Psoas muscle (tissue), 8 donors: ENCODE measurements at regions of chr1 and their contacts with region 1.

Region 1: DNA sequence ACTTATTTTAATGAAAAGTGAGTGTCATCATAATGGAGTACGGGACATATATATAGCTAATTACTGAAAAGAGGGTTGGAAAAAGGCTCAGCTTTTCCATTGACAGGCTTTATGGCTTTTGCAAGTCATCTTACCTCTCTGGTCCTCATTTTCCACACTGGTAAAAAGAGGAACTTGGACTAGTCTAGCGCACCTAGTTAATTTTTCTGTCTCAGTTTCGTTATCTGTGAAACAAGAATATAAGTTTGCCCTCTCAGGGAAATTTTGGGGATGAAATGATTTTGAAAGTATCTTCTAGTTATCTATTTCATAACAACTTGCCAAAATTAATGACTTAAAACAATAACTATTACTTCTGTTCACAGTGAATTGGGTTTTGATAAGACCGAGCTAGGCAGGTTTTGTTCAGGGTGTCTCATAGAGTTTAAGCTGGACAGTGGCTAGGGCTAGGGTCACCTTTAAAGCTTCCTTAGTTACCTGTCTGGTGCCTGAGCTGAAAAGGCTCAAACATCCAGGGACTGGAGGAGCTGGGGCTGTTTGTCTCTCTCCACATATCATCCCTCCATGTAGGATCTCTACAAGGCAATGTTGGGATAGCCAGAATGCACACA is 91.7 kb downstream of the TYW3 start:
- DNase-seq: no peak
- ATAC-seq: no peak
- H3K4me3 ChIP-seq: no peak overlapping the region
- H3K27ac ChIP-seq: no peak overlapping the region
- H3K4me1 ChIP-seq: no peaks in the 10 kb centered on the region
- H3K27me3 ChIP-seq: peaks cover 0 to 2% (median 0%) of the 10 kb centered on the region in 3 donors
- CTCF ChIP-seq: no peak

Region 2: DNA sequence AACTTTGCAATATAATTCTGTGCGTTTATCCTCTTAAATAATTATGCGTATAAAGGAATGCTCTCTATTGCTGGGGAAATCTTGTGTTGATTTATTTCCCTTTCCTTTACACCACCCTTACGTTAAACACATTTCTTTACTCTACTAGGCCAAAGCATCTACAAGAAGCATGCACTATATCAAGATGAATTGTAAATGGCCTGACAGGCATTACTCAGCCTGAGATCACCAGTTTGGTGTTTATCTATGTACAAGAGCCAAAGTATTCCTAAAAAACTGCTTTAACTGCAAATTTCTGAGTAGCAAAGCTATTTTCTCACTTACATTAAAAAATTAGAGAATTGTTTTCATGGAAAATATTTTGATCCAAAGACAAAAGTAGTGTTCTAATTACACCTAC is 23.1 kb after region 1 on chr1:
- intact Hi-C with region 1: loop called in 1 of 2 experiments (anchors 1 kb)
- DNase-seq: no peak
- ATAC-seq: no peak
- H3K4me3 ChIP-seq: no peak overlapping the region
- H3K27ac ChIP-seq: no peak overlapping the region
- H3K4me1 ChIP-seq: no peaks in the 10 kb centered on the region
- H3K27me3 ChIP-seq: no peaks in the 10 kb centered on the region
- CTCF ChIP-seq: no peak